ENCODE measurements at regions of chr18 and their contacts with region 1.

Region 1: GRCh38 chr18:74597662-74598349 is at the start of gene ZNF407:
- DNase-seq: peak; percentile 91
- H3K4me3 Mint-ChIP-seq: peak within 1 kb of the TSS; percentile 86
- H3K27ac Mint-ChIP-seq: peak within 1 kb of the TSS; percentile 98
- H3K4me1 Mint-ChIP-seq: peaks cover 38% of the 10 kb centered on the region
- H3K27me3 Mint-ChIP-seq: no peaks in the 10 kb centered on the region
- total RNA-seq, gene ZNF407: 9.8 to 9.9 TPM

Region 2: DNA sequence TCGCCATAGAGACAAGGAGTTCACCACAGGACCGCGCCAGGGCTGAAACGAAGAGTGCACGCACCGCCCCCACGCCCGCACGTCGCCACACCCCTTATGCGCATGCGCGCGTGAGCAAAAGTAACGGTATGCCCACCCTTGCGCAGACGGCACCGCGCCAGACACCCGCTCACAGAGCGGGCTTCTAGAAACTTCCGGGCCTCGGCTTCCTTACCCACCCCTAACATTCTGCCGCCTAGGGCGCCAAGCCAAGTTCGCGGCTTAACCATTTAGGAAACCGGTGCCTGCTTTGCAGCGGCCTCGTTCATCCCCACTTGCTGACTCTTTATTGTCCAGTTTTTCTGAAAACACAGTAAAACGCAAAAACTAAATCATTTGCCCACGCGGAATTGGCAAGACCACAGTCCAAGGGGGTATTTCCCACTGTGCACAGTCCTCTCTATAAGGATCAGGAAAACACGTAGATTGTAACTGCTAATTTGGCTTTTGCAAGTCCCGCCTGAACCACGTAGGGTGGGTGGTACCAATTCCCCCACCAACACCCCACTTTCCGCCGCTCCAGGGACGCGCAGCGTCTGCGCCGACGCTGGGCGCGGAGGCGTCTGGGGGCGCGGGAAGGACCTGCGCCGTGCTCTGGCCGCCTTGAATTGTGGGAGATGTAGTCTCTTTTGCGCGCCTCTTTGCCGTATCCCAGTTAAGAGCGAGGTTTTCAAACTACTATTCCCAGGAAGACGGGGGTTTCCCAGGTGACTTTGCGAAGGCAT is 449.8 kb before region 1 on chr18 and contains the starts of genes FBXO15 and TIMM21:
- CTCF ChIA-PET with region 1: no interaction called
- intact Hi-C with region 1: loop called (anchors 1 kb)
- DNase-seq: peak; percentile 95
- H3K4me3 Mint-ChIP-seq: peak within 1 kb of the TSS; percentile 96
- H3K27ac Mint-ChIP-seq: peak within 1 kb of the TSS; percentile 97
- H3K4me1 Mint-ChIP-seq: peaks cover 42% of the 10 kb centered on the region
- H3K27me3 Mint-ChIP-seq: no peaks in the 10 kb centered on the region
- total RNA-seq, gene FBXO15: 1.2 to 1.3 TPM
- total RNA-seq, gene TIMM21: 35.6 to 37.7 TPM

Region 3: DNA sequence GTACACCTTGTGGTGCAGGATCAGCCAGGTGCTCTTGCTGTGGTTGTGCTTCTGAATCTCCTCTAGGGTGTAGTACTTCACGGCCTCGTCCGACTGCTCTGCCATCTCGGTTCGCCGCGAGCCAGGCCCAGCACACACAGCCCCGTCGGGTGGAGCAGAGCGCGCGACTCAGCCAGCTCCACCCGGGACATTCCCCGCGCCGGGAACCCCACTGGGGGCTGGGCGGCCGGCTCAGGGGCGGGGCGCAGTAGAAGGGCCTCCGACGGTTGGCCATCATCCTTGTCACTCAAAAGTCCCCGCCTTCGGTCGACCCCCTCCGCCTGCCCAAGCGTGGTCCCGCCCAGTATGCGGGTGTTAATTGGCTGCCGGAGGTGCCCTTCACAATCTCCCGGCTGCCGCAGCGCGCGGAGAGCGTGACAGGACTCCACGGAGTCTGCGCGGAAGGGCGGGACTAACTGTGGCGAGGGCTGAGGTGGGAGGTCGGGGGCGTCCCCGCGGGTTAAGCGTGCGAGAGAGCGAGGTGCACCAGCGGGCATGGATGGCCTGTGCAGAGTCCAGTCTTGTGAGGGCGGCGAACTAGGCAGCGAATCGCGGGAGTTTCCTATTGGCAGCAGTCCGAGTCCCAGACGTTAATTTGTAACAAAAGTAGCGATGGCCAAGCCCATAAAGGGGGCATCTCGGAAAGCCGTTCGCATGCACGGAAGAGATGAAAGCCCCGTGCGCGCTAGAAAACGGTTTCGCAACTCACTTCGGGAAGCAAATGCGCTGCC is 305.9 kb before region 1 on chr18 and contains the start of gene CYB5A:
- CTCF ChIA-PET with region 1: no interaction called
- intact Hi-C with region 1: loop called (anchors 1 kb)
- DNase-seq: peak; percentile 99
- H3K4me3 Mint-ChIP-seq: no peak within 1 kb of the TSS
- H3K27ac Mint-ChIP-seq: peak within 1 kb of the TSS; percentile 59
- H3K4me1 Mint-ChIP-seq: peaks cover 20% of the 10 kb centered on the region
- H3K27me3 Mint-ChIP-seq: no peaks in the 10 kb centered on the region
- total RNA-seq, gene CYB5A: 77.8 to 78.3 TPM

Region 4: DNA sequence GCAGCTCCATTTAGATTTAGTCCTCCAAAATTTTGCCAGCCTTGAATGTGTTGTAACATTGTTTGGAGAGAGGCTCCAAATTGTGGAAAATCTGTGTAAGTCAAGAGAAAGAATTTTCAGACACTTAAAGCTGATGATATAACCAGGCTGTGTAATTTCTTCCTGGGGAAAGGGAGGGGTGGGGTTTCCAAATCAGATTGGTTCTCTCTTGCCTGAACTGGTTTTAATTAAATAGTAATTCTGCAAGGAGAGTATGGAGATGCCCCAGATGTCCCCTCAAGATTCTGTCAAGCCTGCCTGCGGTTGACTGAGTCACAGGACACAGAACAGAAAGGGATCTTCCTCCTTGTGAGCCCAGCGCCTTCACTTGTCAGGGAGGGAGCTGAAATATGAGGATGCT is 227.7 kb before region 1 on chr18:
- CTCF ChIA-PET with region 1: no interaction called
- intact Hi-C with region 1: loop called (anchors 5 kb)
- DNase-seq: no peak
- H3K4me3 Mint-ChIP-seq: no peak overlapping the region
- H3K27ac Mint-ChIP-seq: no peak overlapping the region
- H3K4me1 Mint-ChIP-seq: peaks cover 46% of the 10 kb centered on the region
- H3K27me3 Mint-ChIP-seq: no peaks in the 10 kb centered on the region

Region 5: GRCh38 chr18:74459889-74460288 is 137.9 kb before region 1 on chr18:
- CTCF ChIA-PET with region 1: no interaction called
- intact Hi-C with region 1: no loop called
- DNase-seq: no peak
- H3K4me3 Mint-ChIP-seq: no peak overlapping the region
- H3K27ac Mint-ChIP-seq: no peak overlapping the region
- H3K4me1 Mint-ChIP-seq: peaks cover 8% of the 10 kb centered on the region
- H3K27me3 Mint-ChIP-seq: peaks cover 13% of the 10 kb centered on the region

Region 6: GRCh38 chr18:74631623-74632283 is 33.9 kb after region 1 on chr18:
- CTCF ChIA-PET with region 1: interaction called, 3 read pairs
- intact Hi-C with region 1: loop called (anchors 1 kb)
- DNase-seq: peak; percentile 31
- H3K4me3 Mint-ChIP-seq: peak overlapping the region; percentile 64
- H3K27ac Mint-ChIP-seq: peak overlapping the region; percentile 89
- H3K4me1 Mint-ChIP-seq: peaks cover 46% of the 10 kb centered on the region
- H3K27me3 Mint-ChIP-seq: no peaks in the 10 kb centered on the region

Measured in activated naive CD4-positive, alpha-beta T cell treated with anti-CD3 and anti-CD28 coated beads for 36 hours (primary cell).